ENCODE measurements at regions of chr2 and their contacts with region 1.

Region 1: GRCh38 chr2:138389063-138389462 is 112.5 kb upstream of the SPOPL start:
- DNase-seq: no peak
- H3K4me3 ChIP-seq: no peak overlapping the region
- H3K4me3 Mint-ChIP-seq: no peak overlapping the region
- H3K27ac Mint-ChIP-seq: no peak overlapping the region
- H3K4me1 ChIP-seq: no peaks in the 10 kb centered on the region
- H3K4me1 Mint-ChIP-seq: no peaks in the 10 kb centered on the region
- H3K27me3 ChIP-seq: no peaks in the 10 kb centered on the region
- H3K27me3 Mint-ChIP-seq: no peaks in the 10 kb centered on the region
- CTCF ChIP-seq: no peak

Region 2: GRCh38 chr2:137802038-137802437 is 587.0 kb before region 1 on chr2:
- CTCF ChIA-PET with region 1: no interaction called
- POLR2A ChIA-PET with region 1: no interaction called
- intact Hi-C with region 1: no loop called
- DNase-seq: no peak
- H3K4me3 ChIP-seq: no peak overlapping the region
- H3K4me3 Mint-ChIP-seq: no peak overlapping the region
- H3K27ac Mint-ChIP-seq: no peak overlapping the region
- H3K4me1 ChIP-seq: no peaks in the 10 kb centered on the region; the same call in 1 of the 2 replicates
- H3K4me1 Mint-ChIP-seq: no peaks in the 10 kb centered on the region
- H3K27me3 ChIP-seq: no peaks in the 10 kb centered on the region
- H3K27me3 Mint-ChIP-seq: peaks cover 2% of the 10 kb centered on the region
- CTCF ChIP-seq: no peak

Region 3: DNA sequence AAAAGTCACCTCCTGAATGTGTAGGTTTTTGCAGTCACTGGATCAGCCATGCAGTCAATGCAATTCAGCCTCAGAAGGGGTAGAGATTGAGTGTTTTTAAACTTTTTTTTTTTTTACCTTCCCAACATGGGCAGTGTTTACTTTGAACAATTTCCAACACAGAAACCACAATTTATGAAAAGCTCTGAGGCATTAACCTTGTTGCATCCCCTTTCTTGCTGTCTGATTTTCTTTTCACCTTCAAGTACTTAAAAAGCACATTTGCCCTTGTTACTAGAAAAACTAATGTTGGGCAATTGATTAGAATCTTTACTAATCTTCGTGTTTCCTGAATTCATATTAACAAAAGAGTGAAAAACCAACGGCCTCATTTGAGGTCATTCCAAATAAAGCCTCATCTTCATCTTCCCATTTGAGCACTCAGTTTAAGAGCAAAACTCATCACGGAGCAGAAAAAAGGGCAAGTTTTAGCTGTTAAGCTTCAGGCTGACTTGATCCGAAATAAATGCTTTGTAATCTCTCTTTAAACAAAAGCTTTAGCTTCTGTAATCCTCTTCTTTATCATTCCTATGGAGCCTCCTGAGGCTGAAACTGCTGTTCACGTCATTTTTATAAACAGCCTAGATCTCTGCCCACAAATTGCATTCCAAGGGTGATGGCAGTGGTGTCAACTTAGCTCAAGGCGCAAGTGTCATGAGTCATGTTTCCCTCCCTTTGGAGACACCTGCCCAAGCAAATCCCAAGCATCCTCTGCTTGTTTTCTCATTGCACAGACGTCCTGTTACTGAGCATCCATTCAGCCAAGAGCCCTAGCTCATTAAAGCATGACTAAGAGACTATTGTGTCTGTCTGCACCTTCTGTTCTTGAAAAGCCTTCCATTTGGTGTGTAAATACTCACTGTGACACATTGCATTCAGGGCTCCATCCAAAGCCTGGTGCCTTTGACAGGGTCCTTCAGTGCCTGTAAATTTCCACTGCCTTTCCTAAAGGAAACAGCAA is 317.0 kb before region 1 on chr2:
- CTCF ChIA-PET with region 1: no interaction called
- POLR2A ChIA-PET with region 1: no interaction called
- intact Hi-C with region 1: no loop called
- DNase-seq: peak; percentile 65 to 69
- H3K4me3 ChIP-seq: no peak overlapping the region
- H3K4me3 Mint-ChIP-seq: peak overlapping the region; percentile 42
- H3K27ac Mint-ChIP-seq: peak overlapping the region; percentile 24
- H3K4me1 ChIP-seq: peaks cover 23% of the 10 kb centered on the region
- H3K4me1 Mint-ChIP-seq: peaks cover 7% of the 10 kb centered on the region
- H3K27me3 ChIP-seq: no peaks in the 10 kb centered on the region
- H3K27me3 Mint-ChIP-seq: no peaks in the 10 kb centered on the region
- CTCF ChIP-seq: no peak

Region 4: GRCh38 chr2:138428710-138429440 is 39.8 kb after region 1 on chr2:
- CTCF ChIA-PET with region 1: no interaction called
- POLR2A ChIA-PET with region 1: no interaction called
- intact Hi-C with region 1: loop called (anchors 5 kb)
- DNase-seq: no peak
- H3K4me3 ChIP-seq: no peak overlapping the region
- H3K4me3 Mint-ChIP-seq: no peak overlapping the region
- H3K27ac Mint-ChIP-seq: peak overlapping the region; percentile 15
- H3K4me1 ChIP-seq: peaks cover 8% of the 10 kb centered on the region
- H3K4me1 Mint-ChIP-seq: peaks cover 24% of the 10 kb centered on the region
- H3K27me3 ChIP-seq: no peaks in the 10 kb centered on the region
- H3K27me3 Mint-ChIP-seq: no peaks in the 10 kb centered on the region
- CTCF ChIP-seq: no peak

Measured in Caco-2 (cell line).